ENCODE measurements at regions of chr11 and their contacts with region 1.

Region 1: DNA sequence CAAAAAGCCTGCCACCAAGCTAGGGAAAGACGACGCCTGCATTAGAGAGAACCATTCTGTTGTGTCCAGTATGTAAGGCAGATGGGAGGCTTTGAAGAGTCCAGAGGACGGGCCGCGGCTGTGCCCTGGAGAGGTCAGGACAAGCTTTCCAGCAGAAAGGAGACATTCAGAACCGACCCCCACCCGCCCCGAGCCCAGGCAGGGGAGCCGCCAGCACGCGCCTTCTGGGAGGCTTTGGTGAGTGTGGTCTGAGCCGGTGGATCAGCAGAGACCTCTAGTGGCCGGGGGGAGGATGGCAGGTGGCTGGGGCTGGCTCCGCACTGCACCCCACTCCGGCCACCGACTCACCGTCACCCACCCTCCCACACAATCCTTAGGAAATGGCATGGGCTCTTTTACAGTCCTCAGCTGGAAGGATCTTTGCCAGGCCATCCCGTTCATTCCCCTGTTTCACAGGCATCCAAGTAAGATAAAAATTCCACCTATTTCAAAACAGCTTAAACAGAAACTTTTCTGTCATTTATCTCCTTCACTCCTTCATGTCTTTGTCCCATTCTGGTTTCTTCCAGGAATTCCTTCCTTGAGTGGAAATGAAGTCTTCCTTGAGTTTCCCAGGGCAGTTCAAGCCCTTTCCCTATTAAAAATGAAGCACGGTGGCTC is 91.2 kb downstream of the FEZ1 start:
- DNase-seq: peak; percentile 78
- H3K4me3 Mint-ChIP-seq: no peak overlapping the region
- H3K27ac Mint-ChIP-seq: no peak overlapping the region
- H3K4me1 Mint-ChIP-seq: peaks cover 2% of the 10 kb centered on the region
- H3K27me3 Mint-ChIP-seq: peaks cover 23% of the 10 kb centered on the region

Region 2: DNA sequence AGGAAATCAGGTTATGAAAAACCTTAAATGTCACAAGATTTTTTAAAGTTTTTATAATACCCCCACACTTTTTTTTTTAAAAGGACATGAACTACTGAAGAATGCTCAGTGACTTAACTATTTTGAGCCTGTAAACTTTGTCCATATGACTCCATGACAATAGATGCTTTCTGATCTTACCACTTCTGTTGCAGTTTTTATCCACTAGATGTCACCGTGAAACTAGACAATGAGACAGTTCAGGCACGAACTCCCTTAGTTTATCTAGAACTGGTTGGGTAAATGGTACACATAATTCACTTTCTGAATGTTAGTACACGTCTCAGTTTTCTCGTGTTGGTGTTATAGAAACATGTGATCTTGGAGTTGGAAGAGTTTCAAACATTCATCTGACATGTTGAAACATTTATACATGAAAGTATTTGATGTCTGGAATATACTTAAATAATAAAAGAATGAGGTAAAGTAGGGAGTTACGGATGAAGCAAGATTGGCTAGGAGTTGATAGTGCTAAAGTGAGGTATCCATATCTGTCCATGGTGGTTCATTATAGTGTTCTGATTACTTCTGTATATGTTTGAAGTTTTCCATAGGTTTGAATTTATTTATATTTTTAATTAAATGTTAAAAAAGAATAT is 442.8 kb before region 1 on chr11:
- CTCF ChIA-PET with region 1: no interaction called
- intact Hi-C with region 1: loop called (anchors 2 kb)
- DNase-seq: no peak
- H3K4me3 Mint-ChIP-seq: no peak overlapping the region
- H3K27ac Mint-ChIP-seq: no peak overlapping the region
- H3K4me1 Mint-ChIP-seq: no peaks in the 10 kb centered on the region
- H3K27me3 Mint-ChIP-seq: no peaks in the 10 kb centered on the region

Region 3: DNA sequence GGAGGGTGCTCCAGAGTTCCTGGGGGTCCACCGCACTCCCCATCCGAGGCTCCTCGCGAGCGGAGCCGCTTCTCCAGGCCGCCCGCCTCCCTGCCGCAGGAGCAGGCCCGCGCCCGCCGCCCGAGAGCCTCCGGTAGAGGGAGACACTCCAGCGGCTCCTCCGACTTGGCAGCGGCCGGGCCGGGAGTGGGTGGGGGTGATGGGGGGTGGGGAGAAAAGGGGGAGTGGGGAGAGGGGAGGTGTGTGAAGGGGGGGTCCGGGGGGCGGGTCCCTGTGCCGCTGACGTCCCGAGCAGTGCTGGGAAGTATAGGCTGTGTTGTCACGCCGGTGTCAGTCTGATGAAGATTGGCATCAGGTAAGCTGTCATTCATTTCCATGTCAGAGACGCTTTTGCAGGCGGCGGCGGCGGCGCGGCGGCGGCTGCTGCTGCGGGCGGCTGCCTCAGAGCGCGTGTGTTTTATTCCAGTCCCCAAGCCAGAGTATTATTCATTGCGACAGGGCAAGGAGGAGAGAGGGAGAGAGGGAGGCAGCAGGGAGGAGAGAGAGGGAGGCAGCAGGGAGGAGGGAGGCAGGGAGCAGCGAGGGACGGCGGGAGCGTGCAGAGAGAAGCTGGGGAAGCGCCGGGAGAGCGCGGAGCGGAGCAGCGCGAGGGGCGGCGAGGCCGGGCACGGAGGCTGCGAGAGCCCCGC is 240.3 kb before region 1 on chr11 and contains the start of gene PKNOX2:
- CTCF ChIA-PET with region 1: no interaction called
- intact Hi-C with region 1: loop called (anchors 1 kb)
- DNase-seq: peak; percentile 74
- H3K4me3 Mint-ChIP-seq: peak within 1 kb of the TSS; percentile 85
- H3K27ac Mint-ChIP-seq: no peak within 1 kb of the TSS
- H3K4me1 Mint-ChIP-seq: peaks cover 15% of the 10 kb centered on the region
- H3K27me3 Mint-ChIP-seq: peaks cover 43% of the 10 kb centered on the region
- total RNA-seq, gene PKNOX2: not detected